ENCODE measurements at regions of chr10 and their contacts with region 1.

Region 1: GRCh38 chr10:117226824-117227451 is 14.0 kb upstream of the SLC18A2 start:
- DNase-seq: peak; percentile 43
- H3K4me3 ChIP-seq: no peak overlapping the region
- H3K27ac ChIP-seq: no peak overlapping the region
- H3K4me1 ChIP-seq: no peaks in the 10 kb centered on the region
- H3K27me3 ChIP-seq: no peaks in the 10 kb centered on the region
- CTCF ChIP-seq: peak; percentile 57

Region 2: DNA sequence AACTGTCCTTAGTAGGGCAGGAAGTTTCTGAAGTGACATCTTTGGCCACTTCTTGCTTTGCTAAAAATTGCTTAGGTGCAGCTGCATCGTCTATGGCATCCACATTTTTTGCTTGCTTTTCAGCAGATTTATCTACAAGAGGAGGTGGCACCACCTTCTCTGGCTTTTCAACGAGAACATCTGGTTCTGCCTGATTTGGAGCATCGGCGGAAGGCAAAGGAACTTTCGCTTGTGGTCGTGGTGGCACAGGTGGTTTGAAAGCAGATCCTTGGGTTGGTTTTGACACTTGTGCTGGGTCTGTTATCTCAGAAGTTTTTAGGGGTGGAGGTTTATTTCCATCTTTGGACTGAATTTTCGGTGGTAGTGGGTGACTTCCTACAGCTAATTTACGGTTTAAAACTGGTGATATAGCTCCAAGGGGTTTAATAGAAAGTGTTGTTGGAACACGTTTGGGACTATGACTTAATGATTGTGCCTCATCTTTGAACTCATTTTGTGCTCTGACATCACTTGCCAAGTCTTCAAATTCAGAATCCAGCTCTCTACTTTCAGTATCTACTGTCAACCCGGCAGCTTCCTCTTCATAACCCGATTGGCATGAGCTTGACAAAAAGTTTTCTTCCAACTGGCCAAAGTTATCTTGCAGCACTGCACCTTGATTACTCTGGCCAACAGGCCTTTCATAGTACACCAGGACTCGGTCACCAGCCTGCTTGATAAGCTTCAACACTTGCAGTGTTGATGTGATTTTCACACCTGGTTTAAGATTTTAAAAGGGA is 58.0 kb after region 1 on chr10:
- intact Hi-C with region 1: no loop called
- DNase-seq: no peak
- H3K4me3 ChIP-seq: no peak overlapping the region
- H3K27ac ChIP-seq: no peak overlapping the region
- H3K4me1 ChIP-seq: no peaks in the 10 kb centered on the region
- H3K27me3 ChIP-seq: no peaks in the 10 kb centered on the region
- CTCF ChIP-seq: no peak

Region 3: GRCh38 chr10:117318909-117319308 is 92.0 kb after region 1 on chr10:
- intact Hi-C with region 1: loop called (anchors 10 kb)
- DNase-seq: no peak
- H3K4me3 ChIP-seq: no peak overlapping the region
- H3K27ac ChIP-seq: no peak overlapping the region
- H3K4me1 ChIP-seq: no peaks in the 10 kb centered on the region
- H3K27me3 ChIP-seq: no peaks in the 10 kb centered on the region
- CTCF ChIP-seq: no peak

Region 4: DNA sequence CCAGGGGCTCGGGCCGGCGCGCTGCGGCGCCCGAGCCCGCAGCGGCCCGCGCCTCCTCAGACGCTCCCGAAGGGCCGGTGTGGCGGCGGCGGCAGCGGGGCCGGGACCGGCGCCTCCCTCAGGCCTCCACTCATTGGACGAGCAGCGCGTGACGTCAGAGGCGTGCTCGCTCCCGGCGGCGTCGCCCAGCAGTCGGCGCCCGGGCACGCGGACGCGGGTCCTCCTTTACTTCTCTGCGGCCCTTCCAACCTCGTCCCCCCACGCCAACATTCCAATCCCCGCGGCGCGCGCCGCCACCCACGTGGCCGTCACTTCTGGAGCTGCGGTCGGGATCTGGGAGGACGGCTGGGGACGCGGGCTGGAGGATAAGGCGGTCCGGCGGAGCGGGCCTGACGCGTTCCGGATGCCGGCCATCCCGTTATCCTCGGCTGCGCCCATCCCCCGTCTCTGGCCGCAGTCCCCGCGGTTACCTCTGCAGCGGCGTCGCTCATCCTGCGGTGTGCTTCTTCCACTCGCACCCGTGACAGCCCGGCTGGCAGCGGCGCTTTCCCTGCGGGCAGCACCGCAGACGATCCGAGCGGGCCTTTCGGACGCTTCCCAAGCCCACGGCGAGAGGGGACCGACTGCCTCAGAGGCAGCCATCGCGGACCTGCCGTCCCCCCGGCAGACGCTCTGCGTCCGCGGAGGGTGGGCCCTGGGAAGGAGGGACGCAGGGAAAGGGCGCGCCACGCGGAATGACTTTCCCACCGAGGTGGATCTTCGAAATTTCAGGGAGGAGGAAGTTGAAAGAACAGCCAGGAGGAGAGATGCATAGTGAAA is 148.6 kb after region 1 on chr10 and contains the start of gene PDZD8:
- intact Hi-C with region 1: no loop called
- DNase-seq: peak; percentile 93
- H3K4me3 ChIP-seq: peak within 1 kb of the TSS; percentile 93
- H3K27ac ChIP-seq: peak within 1 kb of the TSS; percentile 90
- H3K4me1 ChIP-seq: peaks cover 3% of the 10 kb centered on the region
- H3K27me3 ChIP-seq: no peaks in the 10 kb centered on the region
- CTCF ChIP-seq: no peak
- total RNA-seq, gene PDZD8: 68.5 to 82.0 TPM